ENCODE measurements at regions of chrX and their contacts with region 1.

Region 1: DNA sequence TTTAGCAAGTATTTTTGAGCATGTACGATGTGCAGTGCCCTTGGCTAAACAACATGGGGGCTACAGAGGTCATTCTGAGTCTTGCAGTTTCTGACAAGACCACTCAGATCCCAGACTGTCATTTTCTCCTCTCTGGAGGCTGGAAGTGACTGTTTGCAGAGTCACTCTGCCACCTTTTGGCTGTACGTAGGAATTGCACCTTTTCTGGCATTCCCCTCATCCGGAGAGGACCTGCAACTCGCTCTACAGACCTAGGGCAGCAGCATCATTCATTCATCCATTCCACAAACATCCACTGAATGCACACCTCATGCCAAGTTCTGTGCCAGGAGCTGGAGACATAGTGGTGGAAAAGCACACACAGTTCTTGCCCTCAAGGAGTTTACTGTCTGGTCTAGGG is 160.4 kb upstream of the GPR101 start:
- DNase-seq: peak; percentile 3 to 47
- H3K4me3 ChIP-seq: no peak overlapping the region
- H3K27ac ChIP-seq: no peak overlapping the region
- H3K4me1 ChIP-seq: no peaks in the 10 kb centered on the region; a peak in 1 of 7 replicates
- H3K27me3 ChIP-seq: no peaks in the 10 kb centered on the region
- CTCF ChIP-seq: peak; percentile 28 to 73 (median 69)
- EP300 ChIP-seq: no peak
- POLR2A ChIP-seq: no peak
- RAD21 ChIP-seq: peak; percentile 76 to 82

Region 2: DNA sequence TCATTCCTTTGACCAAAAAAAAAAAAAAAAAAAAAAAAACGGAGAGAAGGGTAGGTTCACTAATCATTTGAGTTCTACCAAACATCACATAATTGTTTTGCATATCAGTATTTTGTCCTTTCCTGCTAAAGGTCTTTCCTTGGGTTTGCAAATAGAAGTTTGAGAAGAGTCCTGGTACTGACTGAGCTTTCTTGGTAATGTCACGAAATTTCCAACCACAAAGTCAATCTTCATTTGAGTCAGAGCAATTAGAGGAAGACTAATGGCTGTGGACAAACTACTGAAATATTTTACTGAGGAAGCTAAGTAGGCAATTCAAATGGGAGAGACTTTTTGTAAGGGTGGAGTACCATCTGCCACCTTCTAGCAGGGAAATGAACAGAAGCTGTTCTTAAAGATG is 567.9 kb before region 1 on chrX:
- CTCF ChIA-PET with region 1: no interaction called
- POLR2A ChIA-PET with region 1: no interaction called
- DNase-seq: no peak
- H3K4me3 ChIP-seq: no peak overlapping the region
- H3K27ac ChIP-seq: no peak overlapping the region
- H3K4me1 ChIP-seq: no peaks in the 10 kb centered on the region
- H3K27me3 ChIP-seq: no peaks in the 10 kb centered on the region
- CTCF ChIP-seq: no peak
- EP300 ChIP-seq: no peak
- POLR2A ChIP-seq: no peak
- RAD21 ChIP-seq: no peak

Region 3: DNA sequence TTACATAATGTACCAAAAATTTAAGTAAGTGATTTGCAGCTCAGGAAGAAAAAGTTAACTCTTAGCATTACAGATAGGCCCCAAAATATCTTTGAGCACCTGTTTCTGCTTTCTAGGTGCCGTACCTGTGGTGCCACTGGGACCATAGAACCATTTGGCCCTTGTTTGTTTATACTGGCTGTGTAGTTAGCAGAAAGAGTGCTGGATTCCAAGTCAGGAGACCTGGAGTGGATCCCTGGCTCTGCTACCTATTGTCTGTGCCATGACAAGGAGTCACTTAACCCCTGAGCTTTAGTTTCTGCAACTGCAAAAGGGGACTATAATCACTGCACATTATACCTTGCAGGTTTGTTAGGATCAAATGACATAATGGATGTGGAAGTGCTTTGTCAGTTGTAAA is 22.5 kb before region 1 on chrX:
- CTCF ChIA-PET with region 1: interaction called, 55 read pairs
- POLR2A ChIA-PET with region 1: no interaction called
- DNase-seq: no peak
- H3K4me3 ChIP-seq: no peak overlapping the region
- H3K27ac ChIP-seq: no peak overlapping the region
- H3K4me1 ChIP-seq: no peaks in the 10 kb centered on the region
- H3K27me3 ChIP-seq: no peaks in the 10 kb centered on the region
- CTCF ChIP-seq: no peak
- EP300 ChIP-seq: no peak
- POLR2A ChIP-seq: no peak
- RAD21 ChIP-seq: no peak

Region 4: DNA sequence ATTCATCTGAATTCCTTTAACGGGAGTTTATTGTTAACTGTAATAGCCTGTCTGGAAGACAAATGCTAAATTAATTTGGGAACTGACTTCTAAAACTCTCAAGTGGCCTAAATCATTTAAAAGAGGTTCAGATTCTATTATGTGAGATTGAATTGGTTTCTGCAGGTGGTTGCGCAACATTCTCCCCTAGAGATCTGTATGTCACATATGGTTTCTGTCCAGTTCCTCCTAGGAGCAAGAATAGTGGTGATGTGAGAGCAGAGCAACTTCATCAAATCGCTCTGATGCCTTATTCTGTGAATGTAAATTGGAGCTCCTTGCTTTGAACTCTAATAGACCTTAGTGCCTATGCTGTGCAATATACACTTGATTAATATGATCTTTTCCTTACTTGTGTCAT is 15.8 kb before region 1 on chrX:
- CTCF ChIA-PET with region 1: interaction called, 32 read pairs
- POLR2A ChIA-PET with region 1: no interaction called
- DNase-seq: no peak
- H3K4me3 ChIP-seq: no peak overlapping the region
- H3K27ac ChIP-seq: no peak overlapping the region
- H3K4me1 ChIP-seq: no peaks in the 10 kb centered on the region
- H3K27me3 ChIP-seq: no peaks in the 10 kb centered on the region
- CTCF ChIP-seq: no peak
- EP300 ChIP-seq: no peak
- POLR2A ChIP-seq: no peak
- RAD21 ChIP-seq: no peak

Measured in H1 (cell line).